ENCODE measurements at regions of chr7 and their contacts with region 1.

Region 1: DNA sequence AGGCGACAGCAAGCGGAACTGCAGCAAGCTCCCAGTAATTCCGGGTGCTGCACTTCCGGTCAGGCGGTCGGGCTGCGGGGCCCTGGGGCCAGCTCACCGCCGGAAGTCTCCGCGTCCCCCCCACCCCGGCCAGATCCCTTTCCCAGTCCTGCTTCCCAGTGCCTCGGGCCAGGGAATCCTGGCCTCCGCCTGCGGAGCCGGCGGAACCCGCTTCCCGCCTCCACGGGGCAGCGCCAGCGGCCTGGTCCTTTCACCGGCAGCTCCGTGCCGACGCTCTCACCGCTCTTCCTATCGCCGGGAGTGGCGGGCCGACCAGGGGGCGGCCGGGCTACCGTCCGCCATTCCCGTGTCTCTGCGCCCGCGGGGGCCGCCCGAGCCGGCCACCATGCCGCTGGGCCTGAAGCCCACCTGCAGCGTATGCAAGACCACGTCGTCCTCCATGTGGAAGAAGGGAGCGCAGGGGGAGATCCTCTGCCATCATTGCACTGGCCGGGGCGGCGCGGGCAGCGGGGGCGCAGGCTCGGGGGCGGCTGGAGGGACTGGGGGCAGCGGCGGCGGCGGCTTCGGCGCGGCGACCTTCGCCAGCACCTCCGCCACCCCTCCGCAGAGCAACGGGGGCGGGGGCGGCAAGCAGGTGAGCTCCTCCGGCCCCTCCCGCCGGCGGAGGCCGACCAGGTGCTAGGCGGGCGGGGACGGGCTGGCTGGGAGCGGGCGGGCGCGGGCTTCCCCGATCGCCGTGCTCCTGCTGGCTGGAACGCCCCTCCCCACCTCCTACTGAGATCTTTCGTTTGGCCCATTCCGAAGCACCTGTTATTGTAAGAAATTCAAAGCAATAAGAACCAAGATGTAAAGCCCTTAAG is at the start of gene GATAD1:
- DNase-seq: peak; percentile 89
- H3K4me3 ChIP-seq: peak within 1 kb of the TSS; percentile 92 to 98 (median 95)
- H3K27ac ChIP-seq: peak within 1 kb of the TSS; percentile 85
- H3K4me1 ChIP-seq: peaks cover 10% of the 10 kb centered on the region
- H3K27me3 ChIP-seq: no peaks in the 10 kb centered on the region
- CTCF ChIP-seq: peak in 1 of 2 donors; percentile 84
- POLR2A ChIP-seq: peak; percentile 89
- total RNA-seq, gene GATAD1: 26.2 and 28.9 TPM in 2 replicates

Region 2: DNA sequence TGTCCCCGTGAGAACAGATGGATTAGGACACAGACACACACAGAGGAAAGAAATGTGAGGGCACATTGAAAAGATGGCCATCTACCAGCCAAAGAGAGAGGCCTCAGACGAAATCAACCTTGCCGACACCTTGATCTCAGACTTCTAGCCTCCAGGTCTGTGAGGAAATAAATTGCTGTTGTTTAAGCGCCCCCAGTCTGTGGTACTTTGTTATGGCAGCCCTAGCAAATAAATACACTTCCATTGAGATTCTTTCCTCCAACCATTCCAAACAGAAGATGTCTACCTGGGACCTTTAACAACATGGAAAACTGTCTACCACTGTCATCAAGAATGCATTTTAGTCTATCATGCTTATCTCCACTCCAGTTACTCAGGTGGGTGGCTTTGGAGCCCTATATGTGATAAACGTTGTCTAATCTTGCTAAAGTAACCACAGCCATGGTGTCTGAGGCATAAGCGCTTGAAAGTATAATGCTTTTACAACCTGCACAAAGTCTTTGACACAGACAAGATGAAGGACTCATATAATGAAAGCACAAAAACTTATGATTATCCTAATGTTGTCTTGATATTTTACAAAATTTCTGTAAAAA is 811.3 kb before region 1 on chr7:
- CTCF ChIA-PET with region 1: no interaction called
- POLR2A ChIA-PET with region 1: no interaction called
- dilution Hi-C with region 1: no loop called
- intact Hi-C with region 1: loop called (anchors 10 kb)
- DNase-seq: peak; percentile 57
- H3K4me3 ChIP-seq: no peak overlapping the region
- H3K27ac ChIP-seq: no peak overlapping the region
- H3K4me1 ChIP-seq: peaks cover 6% of the 10 kb centered on the region
- H3K27me3 ChIP-seq: peaks cover 0 to 3% of the 10 kb centered on the region in 2 experiments
- CTCF ChIP-seq: peak; percentile 58 to 65
- POLR2A ChIP-seq: no peak

Region 3: GRCh38 chr7:91880413-91881241 is 566.9 kb before region 1 on chr7 and contains the start of gene MTERF1:
- CTCF ChIA-PET with region 1: interaction called, 8 read pairs
- POLR2A ChIA-PET with region 1: no interaction called
- dilution Hi-C with region 1: no loop called
- intact Hi-C with region 1: loop called (anchors 1 kb)
- DNase-seq: peak; percentile 90
- H3K4me3 ChIP-seq: peak within 1 kb of the TSS; percentile 61 to 95 (median 81)
- H3K27ac ChIP-seq: peak within 1 kb of the TSS; percentile 36
- H3K4me1 ChIP-seq: peaks cover 11% of the 10 kb centered on the region
- H3K27me3 ChIP-seq: no peaks in the 10 kb centered on the region
- CTCF ChIP-seq: peak; percentile 96 to 98
- POLR2A ChIP-seq: peak; percentile 90
- total RNA-seq, gene MTERF1: 10.2 TPM in 2 replicates

Region 4: DNA sequence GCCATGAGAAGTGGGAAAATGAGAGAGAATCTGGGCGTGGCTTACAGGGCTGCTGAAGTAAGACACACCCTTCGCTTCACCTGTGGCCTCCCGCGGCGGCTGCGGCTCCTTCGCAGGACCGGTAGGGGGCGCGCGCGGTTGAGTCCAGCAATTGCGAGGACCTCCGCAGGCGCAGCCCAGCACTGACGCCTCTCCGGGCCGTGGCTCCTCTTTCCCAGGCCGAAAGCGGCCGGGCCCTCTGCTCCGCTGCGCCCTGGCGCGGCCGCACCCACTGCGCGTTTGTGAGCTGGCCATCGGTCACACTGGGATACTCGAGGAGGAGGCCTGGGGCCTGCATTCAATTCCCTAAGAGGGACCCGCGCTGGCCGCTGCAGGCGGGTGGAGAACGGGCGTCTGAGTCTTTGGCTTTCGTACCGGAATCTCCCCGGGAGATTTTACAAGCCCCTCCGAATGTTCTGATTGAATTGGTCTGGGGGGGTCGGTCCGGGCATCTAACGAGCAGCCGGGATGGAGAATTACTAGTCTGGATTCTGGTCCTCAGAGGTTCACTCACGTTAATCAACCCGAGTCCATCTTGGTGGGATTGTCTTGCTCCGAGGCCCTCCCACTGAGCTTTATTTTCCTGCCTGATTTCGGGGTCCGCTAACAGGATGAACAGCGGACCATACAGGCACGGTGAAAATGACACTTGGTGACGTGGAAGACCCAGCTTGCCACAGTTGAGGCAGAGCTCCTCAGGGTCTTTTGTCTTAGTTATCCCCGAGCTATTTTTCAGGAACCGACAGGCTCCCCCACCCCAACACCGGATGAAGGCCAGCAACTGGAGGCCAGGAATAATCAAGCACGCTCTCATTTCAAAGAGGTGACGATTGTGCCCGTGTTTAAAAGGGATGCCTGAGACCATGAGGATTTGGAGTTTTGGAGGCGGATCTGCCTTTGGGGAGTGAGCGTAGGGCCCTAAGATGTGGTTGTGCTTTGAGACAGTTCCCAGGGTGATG is 268.3 kb before region 1 on chr7 and contains the start of gene LRRD1:
- CTCF ChIA-PET with region 1: interaction called, 20 read pairs
- POLR2A ChIA-PET with region 1: no interaction called
- dilution Hi-C with region 1: no loop called
- intact Hi-C with region 1: loop called (anchors 1 kb)
- DNase-seq: peak; percentile 91
- H3K4me3 ChIP-seq: peak within 1 kb of the TSS; percentile 44 to 63 (median 53)
- H3K27ac ChIP-seq: peak within 1 kb of the TSS; percentile 28
- H3K4me1 ChIP-seq: peaks cover 8% of the 10 kb centered on the region
- H3K27me3 ChIP-seq: no peaks in the 10 kb centered on the region
- CTCF ChIP-seq: peak; percentile 98 to 99
- POLR2A ChIP-seq: no peak
- total RNA-seq, gene LRRD1: 0.46 TPM in 1 of 2 replicates, not detected in the other

Region 5: GRCh38 chr7:92425321-92425947 is 22.1 kb before region 1 on chr7:
- CTCF ChIA-PET with region 1: interaction called, 94 read pairs
- POLR2A ChIA-PET with region 1: no interaction called
- dilution Hi-C with region 1: no loop called
- intact Hi-C with region 1: loop called (anchors 1 kb)
- DNase-seq: no peak
- H3K4me3 ChIP-seq: no peak overlapping the region
- H3K27ac ChIP-seq: no peak overlapping the region
- H3K4me1 ChIP-seq: no peaks in the 10 kb centered on the region
- H3K27me3 ChIP-seq: peaks cover 3 to 9% of the 10 kb centered on the region in 2 experiments
- CTCF ChIP-seq: peak in 1 of 2 donors; percentile 13
- POLR2A ChIP-seq: no peak

Region 6: GRCh38 chr7:92496876-92497275 is 49.3 kb after region 1 on chr7:
- CTCF ChIA-PET with region 1: no interaction called
- POLR2A ChIA-PET with region 1: no interaction called
- dilution Hi-C with region 1: no loop called
- intact Hi-C with region 1: no loop called
- DNase-seq: no peak
- H3K4me3 ChIP-seq: no peak overlapping the region
- H3K27ac ChIP-seq: no peak overlapping the region
- H3K4me1 ChIP-seq: no peaks in the 10 kb centered on the region
- H3K27me3 ChIP-seq: no peaks in the 10 kb centered on the region
- CTCF ChIP-seq: no peak
- POLR2A ChIP-seq: no peak

Region 7: DNA sequence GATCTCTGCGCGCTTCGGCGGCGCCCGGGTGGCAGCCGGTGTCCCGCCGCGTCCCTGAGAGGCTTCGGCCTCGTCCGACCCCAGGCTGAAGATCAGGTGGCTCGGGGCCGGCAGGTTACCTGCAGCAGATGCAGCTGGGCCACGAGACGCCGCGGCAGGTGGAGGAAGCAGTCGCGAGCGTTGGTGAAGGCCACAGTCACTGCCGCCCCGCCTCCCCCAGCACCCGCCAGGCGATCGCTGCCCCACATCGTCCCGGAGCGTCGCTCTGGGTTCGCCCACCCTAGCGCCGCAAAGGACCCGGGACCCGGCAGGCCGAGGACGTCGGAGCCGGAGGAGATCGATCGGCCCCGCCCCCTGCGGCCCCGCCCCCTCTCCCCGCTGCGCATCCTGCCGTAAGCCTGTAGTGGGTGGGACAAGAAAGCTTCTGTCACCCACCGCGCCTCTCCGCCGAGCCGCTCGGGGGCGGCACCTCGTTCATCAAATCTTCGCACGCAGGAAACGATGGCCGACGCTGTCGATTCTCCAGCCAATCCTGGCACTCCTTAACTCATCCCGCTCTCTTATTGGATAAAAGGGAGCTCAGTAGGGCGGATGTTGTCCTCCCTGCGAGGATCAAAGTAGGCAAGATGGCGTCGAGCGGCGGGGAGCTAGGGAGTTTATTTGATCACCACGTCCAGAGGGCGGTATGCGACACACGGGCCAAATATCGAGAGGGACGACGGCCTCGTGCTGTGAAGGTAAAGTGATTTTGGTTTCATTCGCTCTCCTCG is 80.8 kb after region 1 on chr7 and contains the starts of genes PEX1 and RBM48:
- CTCF ChIA-PET with region 1: interaction called, 10 read pairs
- POLR2A ChIA-PET with region 1: no interaction called
- dilution Hi-C with region 1: no loop called
- intact Hi-C with region 1: loop called (anchors 1 kb)
- DNase-seq: peak; percentile 100
- H3K4me3 ChIP-seq: peak within 1 kb of the TSS; percentile 88 to 100 (median 95)
- H3K27ac ChIP-seq: peak within 1 kb of the TSS; percentile 91
- H3K4me1 ChIP-seq: peaks cover 15% of the 10 kb centered on the region
- H3K27me3 ChIP-seq: no peaks in the 10 kb centered on the region
- CTCF ChIP-seq: peak; percentile 34 to 50
- POLR2A ChIP-seq: peak; percentile 70
- total RNA-seq, gene PEX1: 10.7 and 11.7 TPM in 2 replicates
- total RNA-seq, gene RBM48: 12.0 and 13.1 TPM in 2 replicates

Region 8: GRCh38 chr7:93185303-93186027 is 737.9 kb after region 1 on chr7:
- CTCF ChIA-PET with region 1: no interaction called
- POLR2A ChIA-PET with region 1: no interaction called
- dilution Hi-C with region 1: no loop called
- intact Hi-C with region 1: no loop called
- DNase-seq: peak; percentile 15
- H3K4me3 ChIP-seq: no peak overlapping the region
- H3K27ac ChIP-seq: no peak overlapping the region
- H3K4me1 ChIP-seq: no peaks in the 10 kb centered on the region
- H3K27me3 ChIP-seq: peaks cover 4 to 26% of the 10 kb centered on the region in 2 experiments
- CTCF ChIP-seq: no peak
- POLR2A ChIP-seq: no peak